ENCODE measurements at regions of chr18 and their contacts with region 1.

Region 1: DNA sequence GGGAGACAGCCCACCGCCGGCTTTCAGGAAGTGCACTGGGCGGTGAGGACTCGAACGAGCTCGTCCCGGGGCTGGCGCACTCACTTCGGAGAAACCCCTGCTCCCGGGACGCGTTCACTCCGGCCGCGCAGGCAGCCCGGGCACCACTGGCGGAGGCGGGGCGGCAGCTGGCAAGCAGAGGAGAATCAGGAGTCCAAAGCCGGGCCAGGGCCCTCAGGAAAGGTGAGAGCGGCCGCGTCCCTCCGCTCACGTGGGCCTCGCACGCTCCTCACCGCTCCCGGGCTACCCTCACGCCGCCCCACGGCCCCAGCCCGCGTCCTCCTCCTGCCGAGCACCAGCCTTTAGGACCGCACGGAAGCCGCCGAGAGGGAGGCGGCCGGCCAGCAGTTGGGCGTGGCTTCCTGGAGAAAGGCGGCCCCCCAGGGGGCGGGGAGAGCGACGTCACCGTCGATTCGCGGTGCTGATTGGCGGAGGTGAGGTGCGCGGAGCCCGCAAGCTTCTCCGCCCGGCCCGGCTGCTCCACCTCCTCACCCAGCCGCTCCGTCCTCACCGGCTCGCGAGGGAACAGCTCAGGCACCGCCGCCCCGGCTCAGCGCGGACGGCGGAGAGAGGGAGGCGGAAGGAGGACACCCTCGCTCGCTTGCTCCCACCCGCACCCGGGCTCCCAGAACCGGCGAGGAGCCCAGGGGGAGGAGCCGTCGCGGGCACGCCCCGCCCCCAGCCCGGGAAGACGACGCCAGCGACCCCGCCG is at the start of gene ZCCHC2:
- DNase-seq: peak; percentile 96
- ATAC-seq: peak; percentile 88
- H3K4me3 ChIP-seq: peak within 1 kb of the TSS; percentile 83
- H3K27ac ChIP-seq: peak within 1 kb of the TSS; percentile 71
- H3K4me1 ChIP-seq: peaks cover 3% of the 10 kb centered on the region; the same call in 1 of the 2 replicates
- H3K27me3 ChIP-seq: peaks cover 2% of the 10 kb centered on the region; the same call in 1 of the 2 replicates
- CTCF ChIP-seq: no peak
- POLR2A ChIP-seq: peak; percentile 65; the same call in 1 of the 2 replicates
- RAD21 ChIP-seq: no peak
- total RNA-seq, gene ZCCHC2: 2.2 and 3.6 TPM in 2 replicates

Region 2: GRCh38 chr18:62026586-62026985 is 496.1 kb before region 1 on chr18:
- CTCF ChIA-PET with region 1: no interaction called
- POLR2A ChIA-PET with region 1: no interaction called
- dilution Hi-C with region 1: no loop called
- in situ Hi-C with region 1: no loop called
- intact Hi-C with region 1: loop called (anchors 10 kb)
- DNase-seq: peak; percentile 66
- ATAC-seq: no peak; the same call in 1 of the 2 replicates
- H3K4me3 ChIP-seq: no peak overlapping the region
- H3K27ac ChIP-seq: no peak overlapping the region
- H3K4me1 ChIP-seq: peaks cover 9% of the 10 kb centered on the region
- H3K27me3 ChIP-seq: no peaks in the 10 kb centered on the region
- CTCF ChIP-seq: no peak
- POLR2A ChIP-seq: no peak
- RAD21 ChIP-seq: no peak

Region 3: DNA sequence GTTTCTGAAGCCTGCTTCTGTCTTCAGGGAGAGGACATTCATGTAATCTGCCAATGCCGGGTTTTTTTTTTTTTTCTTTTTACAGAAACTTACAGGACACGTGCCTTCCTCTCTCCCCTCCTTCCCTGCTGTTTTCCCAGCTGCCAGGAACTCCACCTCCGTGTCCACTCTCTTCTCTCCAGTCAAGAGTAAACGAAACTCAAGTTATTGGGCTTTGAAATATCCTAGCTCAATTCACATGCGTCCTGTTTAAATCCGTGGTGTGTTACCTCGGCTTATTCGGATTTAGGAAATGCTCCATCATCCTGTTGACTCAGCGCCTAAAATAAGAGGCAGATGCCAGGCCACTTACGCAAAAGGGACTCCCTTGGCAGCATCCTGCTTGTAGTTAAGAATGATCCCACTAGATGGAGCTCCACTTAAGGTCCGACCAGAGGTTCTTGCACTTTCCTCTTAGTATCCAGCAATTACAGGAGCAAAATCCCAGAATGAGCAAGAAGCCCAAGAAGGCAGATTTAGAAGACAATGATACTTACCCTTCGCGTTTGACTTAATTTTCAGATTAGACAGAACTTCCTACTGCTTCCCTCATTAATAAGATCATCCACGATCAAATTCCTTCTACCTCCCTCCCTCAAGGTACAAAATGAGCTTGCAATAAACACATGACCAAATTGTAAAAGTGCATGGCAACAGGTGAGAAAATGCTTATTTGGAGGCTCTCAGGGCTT is 97.0 kb before region 1 on chr18:
- CTCF ChIA-PET with region 1: interaction called, 8 read pairs
- POLR2A ChIA-PET with region 1: no interaction called
- dilution Hi-C with region 1: no loop called
- in situ Hi-C with region 1: no loop called
- intact Hi-C with region 1: loop called (anchors 1 kb)
- DNase-seq: peak; percentile 96
- ATAC-seq: peak; percentile 95
- H3K4me3 ChIP-seq: peak overlapping the region; percentile 22
- H3K27ac ChIP-seq: peak overlapping the region; percentile 48
- H3K4me1 ChIP-seq: peaks cover 3% of the 10 kb centered on the region; the same call in 1 of the 2 replicates
- H3K27me3 ChIP-seq: peaks cover 9% of the 10 kb centered on the region
- CTCF ChIP-seq: peak; percentile 92
- POLR2A ChIP-seq: no peak
- RAD21 ChIP-seq: peak; percentile 84

Region 4: DNA sequence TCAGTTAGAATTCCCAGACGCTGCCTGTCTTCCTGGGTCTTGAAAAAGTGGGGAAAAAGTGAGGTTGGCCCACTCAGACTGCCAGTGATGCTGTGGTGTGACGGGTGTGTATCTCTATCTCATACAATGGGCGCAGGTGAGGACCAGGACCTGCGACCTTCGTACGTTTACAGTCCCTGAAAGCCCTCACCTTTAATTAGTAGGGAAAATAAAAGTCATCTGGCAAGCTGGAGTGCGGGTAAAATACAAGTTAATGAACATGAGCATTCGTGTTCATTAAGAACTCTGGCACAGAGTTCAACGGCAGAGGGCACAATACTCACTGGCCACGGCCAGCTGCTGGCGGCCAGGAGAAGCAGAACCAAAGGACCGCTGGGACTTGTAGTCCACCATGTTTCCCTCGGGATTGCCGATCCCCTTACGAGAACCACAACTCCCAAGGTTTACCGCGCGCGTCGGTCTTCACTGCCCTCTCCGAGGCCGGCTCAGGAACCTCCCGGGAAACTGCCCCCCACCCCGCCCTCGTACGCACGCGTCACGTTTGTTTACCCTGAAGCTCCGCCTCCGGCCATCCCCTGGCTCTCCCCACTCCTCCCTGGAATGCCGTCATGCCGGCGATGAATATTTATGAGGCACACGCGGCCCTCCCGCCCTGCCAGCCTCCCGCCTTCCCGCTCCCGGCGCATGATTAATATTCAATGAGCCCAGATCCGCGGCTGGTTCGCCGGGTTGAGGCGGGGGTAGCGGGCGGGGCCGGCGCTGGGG is 192.2 kb after region 1 on chr18:
- CTCF ChIA-PET with region 1: no interaction called
- POLR2A ChIA-PET with region 1: no interaction called
- dilution Hi-C with region 1: no loop called
- in situ Hi-C with region 1: no loop called
- intact Hi-C with region 1: loop called (anchors 1 kb)
- DNase-seq: peak; percentile 100
- ATAC-seq: peak; percentile 91
- H3K4me3 ChIP-seq: peak overlapping the region; percentile 67; the same call in 1 of the 2 replicates
- H3K27ac ChIP-seq: peak overlapping the region; percentile 26; the same call in 1 of the 2 replicates
- H3K4me1 ChIP-seq: peaks cover 5% of the 10 kb centered on the region
- H3K27me3 ChIP-seq: no peaks in the 10 kb centered on the region
- CTCF ChIP-seq: peak; percentile 90
- POLR2A ChIP-seq: no peak; the same call in 1 of the 2 replicates
- RAD21 ChIP-seq: peak; percentile 92

Region 5: GRCh38 chr18:62982600-62983251 is 460.0 kb after region 1 on chr18:
- CTCF ChIA-PET with region 1: no interaction called
- POLR2A ChIA-PET with region 1: no interaction called
- dilution Hi-C with region 1: no loop called
- in situ Hi-C with region 1: no loop called
- intact Hi-C with region 1: loop called (anchors 10 kb)
- DNase-seq: peak; percentile 63
- ATAC-seq: peak; percentile 63
- H3K4me3 ChIP-seq: no peak overlapping the region
- H3K27ac ChIP-seq: no peak overlapping the region
- H3K4me1 ChIP-seq: peaks cover 3% of the 10 kb centered on the region
- H3K27me3 ChIP-seq: peaks cover 6% of the 10 kb centered on the region
- CTCF ChIP-seq: peak; percentile 90
- POLR2A ChIP-seq: no peak
- RAD21 ChIP-seq: peak; percentile 92

Region 6: DNA sequence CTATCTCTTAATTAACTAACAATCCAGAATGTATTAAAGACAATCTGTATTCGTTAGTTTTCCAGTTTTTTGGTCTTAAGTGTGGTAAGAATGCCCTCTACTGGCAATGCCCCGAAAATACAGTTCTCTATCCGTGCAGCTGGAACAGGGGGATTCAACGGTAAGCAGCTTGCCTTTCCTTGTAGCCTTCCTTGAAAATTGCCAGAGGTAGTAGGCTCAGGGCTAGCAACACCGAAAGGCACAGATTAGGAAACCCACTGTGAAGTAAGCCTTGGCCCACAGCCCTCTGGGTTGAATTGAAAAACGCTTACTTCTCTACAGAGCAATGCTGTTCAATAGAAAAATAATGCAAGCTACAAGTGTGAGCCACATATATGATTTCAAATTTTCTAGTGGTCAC is 916.7 kb after region 1 on chr18:
- CTCF ChIA-PET with region 1: no interaction called
- POLR2A ChIA-PET with region 1: no interaction called
- dilution Hi-C with region 1: no loop called
- in situ Hi-C with region 1: no loop called
- intact Hi-C with region 1: loop called (anchors 10 kb)
- DNase-seq: peak; percentile 70
- ATAC-seq: peak; percentile 95
- H3K4me3 ChIP-seq: no peak overlapping the region
- H3K27ac ChIP-seq: no peak overlapping the region
- H3K4me1 ChIP-seq: no peaks in the 10 kb centered on the region
- H3K27me3 ChIP-seq: peaks cover 7% of the 10 kb centered on the region
- CTCF ChIP-seq: peak; percentile 85
- POLR2A ChIP-seq: no peak
- RAD21 ChIP-seq: peak; percentile 77